AG04449 (cell line): ENCODE measurements at regions of chr18 and their contacts with region 1.

Region 1: GRCh38 chr18:76937597-76937996 is 115.2 kb downstream of the ZNF236 start:
- DNase-seq: peak; percentile 7
- H3K4me3 ChIP-seq: no peak overlapping the region
- CTCF ChIP-seq: peak; percentile 23

Region 2: GRCh38 chr18:76922107-76922506 is 15.5 kb before region 1 on chr18:
- CTCF ChIA-PET with region 1: interaction called, 12 read pairs
- POLR2A ChIA-PET with region 1: no interaction called
- DNase-seq: no peak
- H3K4me3 ChIP-seq: no peak overlapping the region
- CTCF ChIP-seq: peak; percentile 67